AG04449 (cell line): ENCODE measurements at regions of chr14 and their contacts with region 1.

Region 1: GRCh38 chr14:24215495-24216344 is at the start of gene MDP1:
- DNase-seq: peak; percentile 33
- H3K4me3 ChIP-seq: peak within 1 kb of the TSS; percentile 90
- CTCF ChIP-seq: peak; percentile 70

Region 2: DNA sequence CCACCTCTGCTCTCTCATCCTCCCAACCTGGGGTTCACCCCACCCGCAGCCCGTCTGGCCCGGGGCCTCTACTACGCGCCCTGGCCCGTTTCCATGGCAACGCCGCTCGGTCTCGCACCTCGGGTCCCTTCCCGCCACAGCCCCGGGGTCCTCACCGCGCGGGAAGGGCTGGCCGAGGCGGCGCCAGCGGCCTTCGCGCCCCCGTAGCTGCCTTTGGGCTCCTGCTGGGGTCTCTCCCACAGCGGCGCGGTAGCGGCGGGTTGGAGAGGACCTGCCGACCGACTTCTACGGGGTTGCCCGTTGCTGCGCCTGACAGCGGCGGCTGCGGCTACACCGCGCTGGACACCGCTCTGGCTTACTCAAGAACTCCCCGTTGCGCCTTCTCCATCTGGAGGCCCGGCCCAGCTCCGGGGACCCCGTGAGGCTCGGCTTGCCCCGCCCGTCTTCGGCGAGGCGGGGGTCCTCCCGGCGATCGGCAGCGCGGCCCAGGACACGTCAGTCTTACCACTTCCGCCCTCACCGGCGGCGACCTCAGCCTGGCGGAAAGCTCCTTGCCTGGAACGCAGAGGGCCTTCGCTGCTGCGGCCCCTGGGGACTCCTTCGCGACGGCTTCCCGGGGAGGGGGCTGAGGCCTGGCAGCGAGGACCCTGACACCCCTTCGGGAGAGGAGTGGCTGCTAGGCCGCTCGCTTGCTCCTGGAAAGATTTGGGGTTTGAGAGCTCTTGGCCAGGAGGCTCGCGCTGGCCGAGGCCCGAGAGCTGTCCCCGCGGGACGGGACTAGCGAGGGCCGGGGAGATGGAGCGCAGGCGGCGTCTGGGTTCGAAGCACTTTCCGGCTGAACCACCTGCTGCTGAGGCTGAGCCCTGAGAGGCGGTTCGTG is 20.3 kb before region 1 on chr14 and contains the start of gene TM9SF1:
- CTCF ChIA-PET with region 1: interaction called, 6 read pairs
- POLR2A ChIA-PET with region 1: interaction called, 26 read pairs
- DNase-seq: peak; percentile 34
- H3K4me3 ChIP-seq: peak within 1 kb of the TSS; percentile 92
- CTCF ChIP-seq: no peak